Psoas muscle (tissue), 8 donors: ENCODE measurements at regions of chr17 and their contacts with region 1.

Region 1: DNA sequence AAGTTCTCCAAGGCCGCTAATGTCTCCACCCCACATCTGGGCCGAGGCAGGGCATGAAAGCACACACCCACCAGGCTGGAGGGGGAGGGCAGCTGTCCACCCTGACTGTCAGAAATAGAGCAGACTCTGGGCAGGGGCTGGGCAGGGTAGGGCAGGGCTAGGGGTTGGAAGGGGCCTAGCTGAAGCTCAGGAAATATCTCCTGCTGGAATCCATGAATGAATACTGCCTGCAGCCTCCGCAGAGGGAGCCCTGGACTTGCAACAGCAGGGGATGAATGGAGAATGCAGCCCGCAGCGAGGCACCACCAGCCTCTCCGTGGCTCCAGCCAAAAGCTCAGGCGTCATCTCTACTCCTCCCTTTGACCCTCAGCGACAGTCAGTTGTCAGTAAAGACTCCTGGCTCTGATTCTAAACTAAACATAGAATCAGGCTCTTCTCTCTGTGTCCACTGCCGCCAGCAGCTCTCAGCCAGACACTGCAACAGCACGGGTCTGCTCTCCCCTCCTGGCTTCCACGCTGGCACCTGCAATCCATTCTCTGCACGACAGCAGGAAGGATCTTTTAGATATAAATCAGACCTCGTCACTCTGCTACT is 23.9 kb upstream of the NGFR start:
- DNase-seq: peak; percentile 47 to 70
- ATAC-seq: peak; percentile 84 to 94 (median 90)
- H3K4me3 ChIP-seq: no peak overlapping the region
- H3K27ac ChIP-seq: peak overlapping the region; percentile 53
- H3K4me1 ChIP-seq: peaks cover 20% of the 10 kb centered on the region
- H3K27me3 ChIP-seq: peaks cover 0 to 4% (median 3%) of the 10 kb centered on the region in 3 donors
- CTCF ChIP-seq: no peak

Region 2: GRCh38 chr17:49434821-49435670 is 36.1 kb before region 1 on chr17:
- intact Hi-C with region 1: loop called in 1 of 2 experiments (anchors 5 kb)
- DNase-seq: no peak
- ATAC-seq: peak; percentile 54 to 84 (median 80)
- H3K4me3 ChIP-seq: no peak overlapping the region
- H3K27ac ChIP-seq: no peak overlapping the region
- H3K4me1 ChIP-seq: no peaks in the 10 kb centered on the region
- H3K27me3 ChIP-seq: peaks cover 0 to 13% (median 5%) of the 10 kb centered on the region in 3 donors
- CTCF ChIP-seq: peak; percentile 72

Region 3: GRCh38 chr17:49483599-49484509 is 12.7 kb after region 1 on chr17:
- intact Hi-C with region 1: loop called in 1 of 2 experiments (anchors 1 kb)
- DNase-seq: no peak
- ATAC-seq: no peak
- H3K4me3 ChIP-seq: no peak overlapping the region
- H3K27ac ChIP-seq: no peak overlapping the region
- H3K4me1 ChIP-seq: no peaks in the 10 kb centered on the region
- H3K27me3 ChIP-seq: peaks cover 0 to 25% (median 1%) of the 10 kb centered on the region in 3 donors
- CTCF ChIP-seq: no peak